ENCODE measurements at regions of chr20 and their contacts with region 1.

Region 1: DNA sequence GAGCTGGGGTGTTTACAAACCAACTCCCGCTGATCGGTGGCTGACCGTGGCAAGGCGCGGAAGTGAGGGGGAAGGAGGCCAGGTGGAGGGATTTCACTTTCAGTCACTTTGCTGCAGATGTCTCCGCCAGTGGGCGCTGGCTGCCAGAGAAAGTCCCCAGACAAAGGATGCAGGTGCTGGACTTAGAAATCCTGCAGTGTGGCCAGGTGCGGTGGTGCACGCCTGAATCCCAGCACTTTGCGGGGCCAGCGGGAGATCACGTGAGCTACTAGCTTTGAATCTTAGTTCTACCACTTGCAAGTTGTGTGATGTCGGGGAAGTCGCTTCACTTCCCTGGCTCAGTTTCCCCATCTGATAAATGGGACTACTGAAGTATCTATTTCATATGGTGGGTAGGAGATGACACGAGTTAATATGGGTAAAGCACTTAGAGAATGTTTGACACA is 180.4 kb downstream of the ZNF217 start:
- DNase-seq: peak; percentile 52
- ATAC-seq: peak; percentile 98
- H3K4me3 ChIP-seq: no peak overlapping the region
- H3K27ac ChIP-seq: no peak overlapping the region
- H3K4me1 ChIP-seq: peaks cover 2% of the 10 kb centered on the region; the same call in 1 of the 2 replicates
- H3K27me3 ChIP-seq: no peaks in the 10 kb centered on the region
- CTCF ChIP-seq: peak; percentile 87 to 96 (median 90)
- EP300 ChIP-seq: peak in 1 of 2 experiments; percentile 40; a peak in 1 of 4 replicates
- POLR2A ChIP-seq: no peak
- RAD21 ChIP-seq: peak; percentile 93

Region 2: DNA sequence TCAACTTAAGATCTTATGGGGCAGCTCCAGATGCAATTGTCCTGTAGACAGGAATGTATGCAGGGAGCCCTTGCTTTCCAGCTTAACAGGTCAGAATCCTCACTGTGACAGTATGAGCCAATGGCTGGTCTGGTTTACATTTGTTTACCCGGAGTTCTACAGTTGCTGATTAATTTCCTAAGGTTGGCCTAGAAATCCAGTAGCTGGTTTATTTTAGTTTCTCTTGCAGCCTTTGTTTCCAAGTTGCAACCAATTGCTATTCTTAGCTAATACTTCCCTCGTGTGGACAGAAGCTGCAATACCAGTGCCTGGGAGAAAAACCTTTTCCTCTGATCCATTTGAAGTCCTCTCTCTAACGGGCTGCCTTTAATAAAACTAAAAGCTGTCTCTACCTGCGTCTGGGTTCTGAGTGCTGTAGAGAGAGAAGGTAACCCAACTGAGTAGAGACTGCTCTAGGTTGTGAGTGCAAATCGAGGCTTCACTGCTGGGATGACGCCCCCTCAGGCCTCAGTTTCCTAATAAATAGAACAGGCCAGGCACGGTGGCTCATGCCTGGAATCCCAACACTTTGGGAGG is 134.5 kb after region 1 on chr20:
- CTCF ChIA-PET with region 1: interaction called, 29 read pairs
- POLR2A ChIA-PET with region 1: no interaction called
- RAD21 ChIA-PET with region 1: interaction called, 23 read pairs
- SMC1A ChIA-PET with region 1: interaction called, 20 read pairs
- in situ Hi-C with region 1: loop called (anchors 5 kb)
- intact Hi-C with region 1: loop called (anchors 1 kb)
- DNase-seq: peak; percentile 21
- ATAC-seq: peak; percentile 70
- H3K4me3 ChIP-seq: no peak overlapping the region
- H3K27ac ChIP-seq: no peak overlapping the region
- H3K4me1 ChIP-seq: no peaks in the 10 kb centered on the region
- H3K27me3 ChIP-seq: no peaks in the 10 kb centered on the region
- CTCF ChIP-seq: peak; percentile 65 to 78 (median 65)
- EP300 ChIP-seq: no peak
- POLR2A ChIP-seq: no peak
- RAD21 ChIP-seq: peak; percentile 92

Region 3: DNA sequence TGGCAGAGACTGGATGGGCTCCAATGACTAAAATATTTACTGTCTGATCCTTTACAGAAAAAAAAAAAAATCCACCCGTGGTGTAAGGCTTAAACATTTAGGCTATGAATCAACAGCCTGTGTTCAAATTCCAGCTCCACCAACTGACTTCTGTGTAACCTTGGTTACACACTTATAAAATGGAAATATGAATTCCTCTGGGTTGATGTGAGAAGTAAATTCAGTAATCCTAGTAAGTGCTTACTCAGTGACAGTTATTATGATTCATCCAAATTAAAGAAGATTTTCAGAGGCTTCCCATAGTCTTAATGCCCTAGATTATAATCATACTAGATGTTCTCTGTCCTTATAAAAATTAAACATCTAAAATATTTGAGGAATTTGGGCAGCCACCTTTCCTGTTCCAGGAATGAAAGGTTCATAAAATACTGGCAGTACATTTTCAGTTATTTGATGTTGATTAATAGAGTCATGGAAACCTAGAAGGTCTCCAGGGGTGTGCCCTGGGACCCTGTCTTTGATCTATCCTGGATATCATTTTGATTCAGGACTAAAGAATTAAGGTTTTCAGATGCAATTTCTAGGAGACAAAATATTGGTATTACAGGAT is 360.7 kb after region 1 on chr20:
- CTCF ChIA-PET with region 1: no interaction called
- POLR2A ChIA-PET with region 1: no interaction called
- RAD21 ChIA-PET with region 1: no interaction called
- SMC1A ChIA-PET with region 1: no interaction called
- in situ Hi-C with region 1: loop called (anchors 10 kb)
- intact Hi-C with region 1: no loop called
- DNase-seq: no peak
- ATAC-seq: no peak
- H3K4me3 ChIP-seq: no peak overlapping the region
- H3K27ac ChIP-seq: no peak overlapping the region
- H3K4me1 ChIP-seq: no peaks in the 10 kb centered on the region
- H3K27me3 ChIP-seq: no peaks in the 10 kb centered on the region
- CTCF ChIP-seq: no peak
- EP300 ChIP-seq: no peak
- POLR2A ChIP-seq: no peak
- RAD21 ChIP-seq: no peak